Ascending aorta (tissue), 2 donors: ENCODE measurements at regions of chr11 and their contacts with region 1.

Region 1: DNA sequence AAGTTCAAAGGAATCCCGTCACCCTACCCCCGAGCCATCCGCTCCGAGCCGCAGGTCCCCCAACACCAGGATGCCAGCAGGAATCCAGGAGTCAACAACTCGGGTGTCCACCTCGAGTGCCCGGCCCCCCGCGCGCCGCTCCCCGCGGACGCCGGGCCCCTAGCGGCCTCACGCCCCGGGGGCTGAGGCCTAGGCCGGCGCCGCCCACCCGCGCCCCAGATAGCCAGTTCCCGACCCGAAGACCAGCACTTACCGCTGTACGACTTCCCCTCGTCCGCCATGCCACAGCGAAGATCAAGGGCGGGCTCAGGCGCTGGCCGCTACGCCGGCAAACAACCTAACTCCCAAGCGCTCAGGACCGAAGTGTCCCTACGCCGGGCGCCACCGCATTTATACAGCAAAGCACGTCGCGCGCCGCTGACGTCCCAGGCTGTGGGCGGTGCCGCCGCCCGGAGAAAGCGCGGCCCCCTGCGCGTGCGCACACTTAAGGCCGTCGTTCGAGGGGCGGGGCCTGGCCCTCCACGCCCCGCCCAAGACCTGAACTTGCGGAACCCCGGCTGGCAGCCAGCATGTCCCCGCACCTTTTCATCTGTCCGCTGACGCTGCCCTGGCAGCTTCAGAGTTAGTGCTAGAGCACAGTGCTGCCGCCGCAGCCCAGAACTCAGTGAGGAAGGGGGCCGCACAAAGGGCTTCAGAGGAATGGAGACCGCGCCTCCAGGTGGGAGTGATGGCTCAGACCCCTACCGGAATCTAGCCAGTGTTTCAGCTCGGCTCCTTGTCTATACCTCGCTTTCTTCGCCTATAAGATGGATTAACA is at the start of gene NXF1:
- DNase-seq: peak; percentile 71 to 96
- H3K4me3 ChIP-seq: peak within 1 kb of the TSS; percentile 93 to 94
- H3K27ac ChIP-seq: peak within 1 kb of the TSS; percentile 78 to 97
- H3K4me1 ChIP-seq: peaks cover 4 to 14% of the 10 kb centered on the region in 2 donors
- H3K27me3 ChIP-seq: no peaks in the 10 kb centered on the region
- CTCF ChIP-seq: peak in 1 of 3 experiments; percentile 37
- total RNA-seq, gene NXF1: 41.8 TPM

Region 2: DNA sequence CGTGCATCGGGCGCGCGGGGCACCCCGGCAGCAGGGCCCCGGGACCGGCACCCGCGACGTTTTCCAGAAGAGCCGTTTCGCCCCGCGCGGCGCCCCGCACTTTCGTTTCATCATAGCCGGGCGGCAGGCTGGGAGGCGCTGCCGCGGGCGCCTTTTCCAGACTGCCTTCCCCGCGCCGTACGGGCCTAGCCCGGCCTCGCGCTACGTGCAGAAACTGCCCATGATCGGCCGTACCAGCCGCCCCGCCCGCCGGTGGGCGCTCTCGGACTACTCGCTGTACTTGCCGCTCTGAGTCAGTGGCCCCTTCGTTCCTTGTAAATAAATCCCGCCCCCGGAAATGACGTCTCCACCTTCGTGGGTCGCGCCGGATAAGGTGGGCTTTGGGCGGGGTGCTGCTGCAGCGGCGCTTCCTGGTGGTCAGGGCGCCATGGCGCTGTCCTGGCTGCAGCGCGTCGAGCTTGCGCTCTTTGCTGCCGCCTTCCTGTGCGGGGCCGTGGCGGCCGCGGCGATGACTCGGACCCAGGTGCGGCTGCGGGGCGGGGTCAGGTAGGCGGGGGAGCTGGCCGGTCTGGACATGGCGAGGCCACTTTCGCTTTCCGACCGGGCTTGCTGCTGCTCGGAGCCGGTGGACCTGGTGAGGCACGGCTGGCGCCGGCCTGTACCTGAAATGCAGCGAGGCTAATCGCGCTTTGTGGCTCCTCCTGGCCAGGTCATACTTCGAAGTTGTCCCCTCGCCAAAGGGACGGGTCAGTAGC is 18.1 kb before region 1 on chr11 and contains the start of gene TMEM179B:
- intact Hi-C with region 1: loop called (anchors 1 kb)
- DNase-seq: peak; percentile 96 to 100
- H3K4me3 ChIP-seq: peak within 1 kb of the TSS; percentile 78 to 94
- H3K27ac ChIP-seq: peak within 1 kb of the TSS; percentile 86 to 97
- H3K4me1 ChIP-seq: peaks cover 4 to 25% of the 10 kb centered on the region in 2 donors
- H3K27me3 ChIP-seq: no peaks in the 10 kb centered on the region
- CTCF ChIP-seq: peak; percentile 59 to 75 (median 62)
- total RNA-seq, gene TMEM179B: 102 TPM

Region 3: GRCh38 chr11:62831520-62832335 is 26.4 kb after region 1 on chr11 and contains the start of gene STX5:
- intact Hi-C with region 1: loop called (anchors 1 kb)
- DNase-seq: peak; percentile 96 to 100
- H3K4me3 ChIP-seq: peak within 1 kb of the TSS; percentile 74 to 77
- H3K27ac ChIP-seq: peak within 1 kb of the TSS; percentile 90 to 95
- H3K4me1 ChIP-seq: peaks cover 0 to 31% of the 10 kb centered on the region in 2 donors
- H3K27me3 ChIP-seq: no peaks in the 10 kb centered on the region
- CTCF ChIP-seq: no peak
- total RNA-seq, gene STX5: 40.3 TPM

Region 4: GRCh38 chr11:62880803-62881578 is 75.7 kb after region 1 on chr11 and contains the start of gene SLC3A2:
- intact Hi-C with region 1: loop called (anchors 1 kb)
- DNase-seq: peak; percentile 70 to 94
- H3K4me3 ChIP-seq: peak within 1 kb of the TSS; percentile 56 to 95
- H3K27ac ChIP-seq: peak within 1 kb of the TSS; percentile 91 to 98
- H3K4me1 ChIP-seq: peaks cover 17 to 44% of the 10 kb centered on the region in 2 donors
- H3K27me3 ChIP-seq: no peaks in the 10 kb centered on the region
- CTCF ChIP-seq: peak; percentile 64 to 89 (median 85)
- total RNA-seq, gene SLC3A2: 143 TPM